Activated CD8-positive, alpha-beta T cell treated with anti-CD3 and anti-CD28 coated beads, Interleukin-2, amount 10 ng/mL, durations not matched to agents 7 days and 5 days (primary cell): ENCODE measurements at regions of chrX and their contacts with region 1.

Region 1: DNA sequence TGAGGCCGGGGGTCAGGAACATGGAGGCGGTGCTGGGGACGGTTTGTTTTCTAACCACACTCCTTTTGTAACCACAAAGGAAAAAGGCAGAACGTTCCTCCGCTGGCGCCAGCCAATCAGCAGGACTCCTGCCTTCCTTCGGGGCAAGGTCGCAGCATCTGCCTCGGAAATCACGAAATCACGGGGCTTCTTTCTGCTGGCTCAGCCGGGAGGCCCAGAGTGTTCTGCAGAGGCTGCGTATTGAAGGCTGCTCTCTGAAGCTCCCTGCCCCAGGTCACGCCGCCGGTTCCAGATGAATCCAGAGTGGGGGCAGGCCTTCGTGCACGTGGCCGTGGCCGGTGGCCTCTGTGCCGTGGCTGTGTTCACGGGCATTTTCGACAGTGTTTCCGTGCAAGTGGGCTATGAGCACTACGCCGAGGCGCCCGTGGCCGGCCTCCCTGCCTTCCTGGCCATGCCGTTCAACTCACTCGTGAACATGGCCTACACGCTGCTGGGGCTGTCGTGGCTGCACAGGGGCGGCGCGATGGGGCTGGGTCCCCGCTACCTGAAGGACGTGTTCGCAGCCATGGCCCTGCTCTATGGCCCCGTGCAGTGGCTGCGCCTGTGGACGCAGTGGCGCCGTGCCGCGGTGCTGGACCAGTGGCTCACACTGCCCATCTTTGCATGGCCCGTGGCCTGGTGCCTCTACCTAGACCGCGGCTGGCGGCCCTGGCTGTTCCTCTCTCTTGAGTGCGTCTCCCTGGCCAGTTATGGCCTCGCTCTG is 9.4 kb downstream of the TMEM187 start:
- DNase-seq: peak; percentile 77
- ATAC-seq: peak; percentile 48
- H3K4me3 Mint-ChIP-seq: peak overlapping the region; percentile 52
- H3K27ac Mint-ChIP-seq: peak overlapping the region; percentile 92
- H3K4me1 Mint-ChIP-seq: peaks cover 57% of the 10 kb centered on the region
- H3K27me3 Mint-ChIP-seq: no peaks in the 10 kb centered on the region

Region 2: GRCh38 chrX:153744214-153744724 is 237.7 kb before region 1 on chrX:
- CTCF ChIA-PET with region 1: no interaction called
- POLR2A ChIA-PET with region 1: no interaction called
- DNase-seq: no peak
- ATAC-seq: no peak
- H3K4me3 Mint-ChIP-seq: no peak overlapping the region
- H3K27ac Mint-ChIP-seq: no peak overlapping the region
- H3K4me1 Mint-ChIP-seq: peaks cover 25% of the 10 kb centered on the region
- H3K27me3 Mint-ChIP-seq: peaks cover 2% of the 10 kb centered on the region

Region 3: DNA sequence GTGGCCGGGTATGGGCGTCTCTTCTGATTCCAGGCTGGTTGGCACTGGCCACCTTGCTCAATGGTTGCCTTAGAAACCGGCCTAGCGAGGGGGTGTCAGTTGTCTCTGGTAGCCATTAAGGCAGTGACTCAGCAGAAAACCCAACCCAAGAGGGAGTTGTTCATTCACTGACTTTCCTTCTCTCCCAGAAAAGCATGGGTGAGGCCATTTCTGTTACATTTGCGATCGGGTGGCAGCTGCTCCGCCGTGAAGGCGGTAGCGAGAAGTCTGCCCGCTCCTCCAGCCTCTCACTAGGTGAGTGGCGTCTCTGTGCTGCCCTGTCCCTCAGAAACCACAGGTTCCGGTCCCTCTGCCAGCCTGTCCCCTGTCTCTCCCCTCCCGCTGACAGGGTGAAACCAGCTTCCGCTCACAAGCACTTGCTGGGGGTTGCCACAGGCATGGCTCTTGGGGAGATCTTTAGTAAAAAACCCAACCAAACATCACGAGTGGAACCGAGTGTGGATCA is 20.3 kb after region 1 on chrX:
- CTCF ChIA-PET with region 1: interaction called, 4 read pairs
- POLR2A ChIA-PET with region 1: interaction called, 10 read pairs
- DNase-seq: peak; percentile 67
- ATAC-seq: peak; percentile 90
- H3K4me3 Mint-ChIP-seq: peak overlapping the region; percentile 57
- H3K27ac Mint-ChIP-seq: peak overlapping the region; percentile 88
- H3K4me1 Mint-ChIP-seq: peaks cover 15% of the 10 kb centered on the region
- H3K27me3 Mint-ChIP-seq: no peaks in the 10 kb centered on the region

Region 4: GRCh38 chrX:154019633-154020528 is 37.9 kb after region 1 on chrX and contains the start of gene IRAK1:
- CTCF ChIA-PET with region 1: no interaction called
- POLR2A ChIA-PET with region 1: interaction called, 11 read pairs
- DNase-seq: peak; percentile 53
- ATAC-seq: peak; percentile 83
- H3K4me3 Mint-ChIP-seq: peak within 1 kb of the TSS; percentile 87
- H3K27ac Mint-ChIP-seq: peak within 1 kb of the TSS; percentile 93
- H3K4me1 Mint-ChIP-seq: peaks cover 21% of the 10 kb centered on the region
- H3K27me3 Mint-ChIP-seq: no peaks in the 10 kb centered on the region
- total RNA-seq, gene IRAK1: 164 to 165 TPM